Keratinocyte (primary cell): ENCODE measurements at regions of chr15 and their contacts with region 1.

Region 1: DNA sequence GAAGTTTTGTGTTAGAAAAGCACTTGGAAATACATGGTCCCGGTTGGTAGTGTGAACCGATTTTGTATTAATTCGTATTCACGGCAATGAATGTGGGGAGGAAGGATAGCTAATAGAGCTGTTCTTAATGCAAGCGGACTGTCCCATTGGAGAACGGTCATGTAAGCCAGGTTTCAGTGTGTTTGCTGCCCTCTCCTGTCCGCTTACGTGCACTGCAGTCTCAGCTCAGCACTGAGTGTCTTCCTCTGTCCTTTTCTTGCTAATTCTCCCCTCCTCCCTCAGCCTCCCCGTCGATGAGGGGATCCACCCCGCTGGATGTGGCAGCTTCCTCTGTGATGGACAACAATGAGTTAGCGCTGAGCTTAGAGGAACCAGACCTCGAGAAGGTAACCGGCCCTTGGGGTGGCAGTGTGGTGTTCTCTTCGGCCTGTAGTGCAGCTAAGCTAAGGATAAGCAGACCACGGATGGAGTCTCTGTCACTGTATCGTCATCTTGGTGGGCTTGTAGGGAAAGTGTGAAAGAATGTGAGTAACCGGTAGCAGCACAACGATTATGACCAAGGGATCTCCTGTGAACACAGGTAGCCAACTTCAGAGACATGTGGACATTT is 267.5 kb upstream of the CHRM5 start:
- DNase-seq: no peak
- H3K4me3 ChIP-seq: no peak overlapping the region
- H3K27ac ChIP-seq: no peak overlapping the region
- H3K4me1 ChIP-seq: peaks cover 2% of the 10 kb centered on the region
- H3K27me3 ChIP-seq: peaks cover 7% of the 10 kb centered on the region
- CTCF ChIP-seq: peak; percentile 96 to 100 (median 98)

Region 2: GRCh38 chr15:33226559-33227181 is 474.1 kb before region 1 on chr15:
- dilution Hi-C with region 1: loop called (anchors 25 kb)
- DNase-seq: no peak
- H3K4me3 ChIP-seq: no peak overlapping the region
- H3K27ac ChIP-seq: no peak overlapping the region
- H3K4me1 ChIP-seq: no peaks in the 10 kb centered on the region
- H3K27me3 ChIP-seq: no peaks in the 10 kb centered on the region
- CTCF ChIP-seq: peak; percentile 27 to 68 (median 59)

Region 3: GRCh38 chr15:33500432-33501195 is 200.2 kb before region 1 on chr15:
- dilution Hi-C with region 1: no loop called
- DNase-seq: no peak
- H3K4me3 ChIP-seq: no peak overlapping the region
- H3K27ac ChIP-seq: no peak overlapping the region
- H3K4me1 ChIP-seq: no peaks in the 10 kb centered on the region
- H3K27me3 ChIP-seq: peaks cover 7% of the 10 kb centered on the region
- CTCF ChIP-seq: no peak

Region 4: DNA sequence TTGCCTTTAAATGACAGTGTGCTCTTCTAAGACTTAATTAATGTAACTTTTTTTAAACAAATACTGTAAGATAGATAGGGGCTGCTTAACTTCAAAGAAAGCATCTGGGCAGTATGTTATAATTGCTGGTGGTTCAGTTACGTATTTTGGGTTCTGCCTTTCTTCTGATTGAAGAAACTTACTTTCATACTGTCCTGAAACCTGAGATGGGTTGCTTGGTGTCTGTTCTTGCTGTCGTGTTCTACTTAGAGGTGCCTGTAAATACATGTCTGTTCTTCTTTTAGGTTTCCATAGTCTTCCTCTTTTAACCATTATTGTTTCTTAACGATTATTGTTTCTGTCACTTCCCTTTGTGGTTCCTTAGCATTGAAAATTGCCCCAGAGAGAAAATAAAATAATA is 30.2 kb before region 1 on chr15:
- dilution Hi-C with region 1: no loop called
- DNase-seq: no peak
- H3K4me3 ChIP-seq: no peak overlapping the region
- H3K27ac ChIP-seq: no peak overlapping the region
- H3K4me1 ChIP-seq: no peaks in the 10 kb centered on the region
- H3K27me3 ChIP-seq: no peaks in the 10 kb centered on the region
- CTCF ChIP-seq: no peak